ENCODE measurements at regions of chr15 and their contacts with region 1.

Region 1: DNA sequence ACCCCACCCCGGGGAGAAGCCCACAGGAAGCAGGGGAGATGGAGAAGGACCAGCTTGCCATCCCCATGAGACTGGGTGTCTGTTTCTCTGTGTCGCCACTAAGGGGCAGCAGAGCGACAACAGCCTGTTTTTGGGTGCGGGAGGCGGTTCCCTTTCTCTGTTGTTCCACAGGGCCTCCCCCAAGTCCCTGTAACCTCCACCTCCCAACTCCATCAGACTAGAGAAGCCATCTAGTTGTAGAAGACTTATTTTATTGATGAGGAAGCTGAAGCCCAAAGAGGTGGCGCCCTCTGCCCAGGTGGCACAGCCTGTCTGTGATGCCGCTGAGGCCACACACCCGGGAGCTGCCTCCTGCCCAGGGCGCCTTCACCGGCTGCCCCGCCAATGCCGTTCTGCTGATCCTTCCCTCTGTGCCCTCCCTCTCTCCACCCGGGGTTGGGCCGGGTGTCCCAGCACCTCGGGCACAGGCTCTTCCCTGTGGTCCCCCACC is 3.9 kb upstream of the CCDC9B start:
- DNase-seq: peak; percentile 55 to 61
- ATAC-seq: peak; percentile 48 to 63; a peak in 5 of 6 replicates
- H3K4me3 ChIP-seq: no peak overlapping the region
- H3K27ac ChIP-seq: peak overlapping the region; percentile 16 to 71; a peak in 3 of 6 replicates
- H3K4me1 ChIP-seq: peaks cover 44% of the 10 kb centered on the region
- CTCF ChIP-seq: peak; percentile 51
- EP300 ChIP-seq: no peak
- POLR2A ChIP-seq: no peak
- RAD21 ChIP-seq: peak; percentile 51 to 64; a peak in 4 of 5 replicates

Region 2: GRCh38 chr15:40357723-40358470 is 13.2 kb after region 1 on chr15 and contains the start of gene DISP2:
- CTCF ChIA-PET with region 1: interaction called, 135 read pairs
- POLR2A ChIA-PET with region 1: no interaction called
- DNase-seq: peak; percentile 69 to 83
- ATAC-seq: peak; percentile 79 to 89
- H3K4me3 ChIP-seq: peak within 1 kb of the TSS; percentile 57
- H3K27ac ChIP-seq: peak within 1 kb of the TSS in 1 of 2 experiments; percentile 77; a peak in 2 of 6 replicates
- H3K4me1 ChIP-seq: peaks cover 6% of the 10 kb centered on the region; the same call in 1 of the 3 replicates
- CTCF ChIP-seq: no peak
- EP300 ChIP-seq: no peak
- POLR2A ChIP-seq: no peak
- RAD21 ChIP-seq: no peak
- polyA plus RNA-seq, gene DISP2: 0.26 and 0.52 TPM in 2 replicates

Region 3: GRCh38 chr15:40405501-40406381 is 61.1 kb after region 1 on chr15 and contains the start of gene IVD:
- CTCF ChIA-PET with region 1: interaction called, 27 read pairs
- POLR2A ChIA-PET with region 1: interaction called, 3 read pairs
- DNase-seq: peak; percentile 79 to 88
- ATAC-seq: peak; percentile 99
- H3K4me3 ChIP-seq: peak within 1 kb of the TSS; percentile 60
- H3K27ac ChIP-seq: peak within 1 kb of the TSS; percentile 73 to 91
- H3K4me1 ChIP-seq: peaks cover 2% of the 10 kb centered on the region; the same call in 1 of the 3 replicates
- CTCF ChIP-seq: no peak
- EP300 ChIP-seq: no peak
- POLR2A ChIP-seq: peak; percentile 49
- RAD21 ChIP-seq: no peak
- polyA plus RNA-seq, gene IVD: 10.2 and 14.8 TPM in 2 replicates

Region 4: GRCh38 chr15:40421246-40422157 is 76.8 kb after region 1 on chr15:
- CTCF ChIA-PET with region 1: interaction called, 49 read pairs
- POLR2A ChIA-PET with region 1: no interaction called
- DNase-seq: peak; percentile 55 to 63
- ATAC-seq: peak; percentile 97
- H3K4me3 ChIP-seq: no peak overlapping the region
- H3K27ac ChIP-seq: no peak overlapping the region
- H3K4me1 ChIP-seq: peaks cover 4% of the 10 kb centered on the region; the same call in 2 of the 3 replicates
- CTCF ChIP-seq: peak; percentile 68
- EP300 ChIP-seq: no peak
- POLR2A ChIP-seq: no peak
- RAD21 ChIP-seq: peak; percentile 81 to 85

Measured in A549 (cell line).